WTC11 (cell line): ENCODE measurements at regions of chr6 and their contacts with region 1.

Region 1: DNA sequence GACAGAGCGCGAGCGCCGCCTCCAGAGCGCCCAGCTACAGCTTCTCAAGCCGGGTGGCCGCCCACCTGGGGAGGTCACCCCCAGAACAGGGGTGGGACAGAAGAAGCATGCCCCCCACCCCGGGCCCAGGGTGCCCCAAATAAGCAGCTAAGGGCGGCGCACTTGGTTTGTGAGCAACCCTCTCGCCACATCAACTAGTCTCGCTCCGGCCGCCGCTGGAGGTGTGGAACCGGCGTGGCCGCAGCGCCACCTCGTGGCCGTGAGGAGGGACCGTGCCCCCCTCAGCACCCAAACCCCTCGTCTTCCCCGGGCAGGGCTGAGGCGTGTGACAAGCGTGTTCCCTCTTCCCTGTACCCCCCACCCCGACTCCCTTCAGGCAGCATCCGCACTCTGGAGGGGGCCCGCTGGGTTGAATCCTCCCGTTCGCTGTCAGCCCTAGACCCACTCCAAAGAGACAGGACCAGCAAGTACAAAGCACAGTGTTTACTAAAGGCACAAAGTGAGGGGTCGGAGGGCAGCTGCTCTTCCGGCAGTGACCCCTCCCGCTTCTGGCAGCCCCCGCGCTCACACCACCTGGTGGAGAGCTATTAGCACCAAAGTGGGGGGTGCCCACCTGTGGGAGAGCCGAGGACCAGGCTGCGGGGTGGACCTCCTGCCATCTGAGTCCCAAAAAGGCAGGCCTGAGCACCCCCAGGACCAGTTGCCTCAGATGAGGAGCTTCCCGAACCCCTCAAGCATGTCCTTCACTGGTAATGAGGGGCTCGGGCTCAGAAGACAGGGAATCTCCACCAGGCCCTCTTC is 45.4 kb downstream of the MDFI start:
- DNase-seq: peak; percentile 82
- ATAC-seq: peak; percentile 50
- H3K4me3 Mint-ChIP-seq: peak overlapping the region; percentile 54
- H3K27ac Mint-ChIP-seq: no peak overlapping the region
- H3K4me1 Mint-ChIP-seq: peaks cover 47% of the 10 kb centered on the region
- H3K27me3 Mint-ChIP-seq: peaks cover 9% of the 10 kb centered on the region
- CTCF ChIP-seq: peak; percentile 86

Region 2: DNA sequence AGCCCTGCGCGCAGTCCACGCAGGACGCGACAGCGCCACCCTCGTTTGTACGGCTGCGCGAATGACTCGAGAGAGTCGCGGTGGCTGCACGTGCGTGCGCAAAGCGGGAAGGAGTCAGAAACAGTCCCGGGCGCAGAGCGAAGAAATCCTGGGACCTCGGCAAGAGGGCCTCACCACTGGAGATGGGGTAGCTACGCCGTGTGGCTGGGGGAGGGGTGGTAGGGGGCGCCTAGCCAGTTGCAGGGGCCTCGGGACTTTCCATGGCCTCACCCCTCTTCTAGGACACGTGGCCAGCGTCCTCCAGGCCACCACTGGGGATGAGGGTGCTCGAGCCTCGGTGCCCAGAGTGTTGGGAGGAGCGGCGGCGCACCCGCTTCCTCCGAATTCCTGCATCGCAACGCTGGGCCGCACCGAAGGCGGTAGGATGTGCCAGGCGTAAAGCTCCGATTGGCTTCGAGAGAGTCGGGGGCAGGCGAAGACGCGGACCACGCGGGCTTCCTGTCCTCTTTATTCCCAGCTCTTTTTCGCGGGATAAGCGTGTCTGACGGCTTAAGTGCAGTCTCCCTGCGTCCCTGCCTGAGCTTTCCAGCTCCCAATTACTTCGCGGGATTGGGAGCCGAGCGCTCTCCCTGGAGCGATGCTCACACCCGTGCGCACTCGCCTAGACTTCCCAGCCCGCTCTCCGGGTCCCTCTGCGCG is 309.6 kb before region 1 on chr6:
- CTCF ChIA-PET with region 1: interaction called, 152 read pairs
- POLR2A ChIA-PET with region 1: no interaction called
- DNase-seq: peak; percentile 72
- ATAC-seq: peak; percentile 29
- H3K4me3 Mint-ChIP-seq: peak overlapping the region; percentile 65
- H3K27ac Mint-ChIP-seq: no peak overlapping the region
- H3K4me1 Mint-ChIP-seq: peaks cover 50% of the 10 kb centered on the region
- H3K27me3 Mint-ChIP-seq: peaks cover 99% of the 10 kb centered on the region
- CTCF ChIP-seq: no peak

Region 3: GRCh38 chr6:41597246-41598000 is 86.3 kb before region 1 on chr6:
- CTCF ChIA-PET with region 1: interaction called, 144 read pairs
- POLR2A ChIA-PET with region 1: interaction called, 8 read pairs
- DNase-seq: no peak
- ATAC-seq: peak; percentile 15
- H3K4me3 Mint-ChIP-seq: no peak overlapping the region
- H3K27ac Mint-ChIP-seq: no peak overlapping the region
- H3K4me1 Mint-ChIP-seq: peaks cover 42% of the 10 kb centered on the region
- H3K27me3 Mint-ChIP-seq: peaks cover 3% of the 10 kb centered on the region; the same call in 1 of the 2 replicates
- CTCF ChIP-seq: no peak

Region 4: GRCh38 chr6:41644297-41644879 is 39.3 kb before region 1 on chr6:
- CTCF ChIA-PET with region 1: interaction called, 13 read pairs
- POLR2A ChIA-PET with region 1: no interaction called
- DNase-seq: no peak
- ATAC-seq: peak; percentile 17
- H3K4me3 Mint-ChIP-seq: peak overlapping the region; percentile 13
- H3K27ac Mint-ChIP-seq: no peak overlapping the region
- H3K4me1 Mint-ChIP-seq: peaks cover 67% of the 10 kb centered on the region
- H3K27me3 Mint-ChIP-seq: peaks cover 11% of the 10 kb centered on the region
- CTCF ChIP-seq: no peak

Region 5: DNA sequence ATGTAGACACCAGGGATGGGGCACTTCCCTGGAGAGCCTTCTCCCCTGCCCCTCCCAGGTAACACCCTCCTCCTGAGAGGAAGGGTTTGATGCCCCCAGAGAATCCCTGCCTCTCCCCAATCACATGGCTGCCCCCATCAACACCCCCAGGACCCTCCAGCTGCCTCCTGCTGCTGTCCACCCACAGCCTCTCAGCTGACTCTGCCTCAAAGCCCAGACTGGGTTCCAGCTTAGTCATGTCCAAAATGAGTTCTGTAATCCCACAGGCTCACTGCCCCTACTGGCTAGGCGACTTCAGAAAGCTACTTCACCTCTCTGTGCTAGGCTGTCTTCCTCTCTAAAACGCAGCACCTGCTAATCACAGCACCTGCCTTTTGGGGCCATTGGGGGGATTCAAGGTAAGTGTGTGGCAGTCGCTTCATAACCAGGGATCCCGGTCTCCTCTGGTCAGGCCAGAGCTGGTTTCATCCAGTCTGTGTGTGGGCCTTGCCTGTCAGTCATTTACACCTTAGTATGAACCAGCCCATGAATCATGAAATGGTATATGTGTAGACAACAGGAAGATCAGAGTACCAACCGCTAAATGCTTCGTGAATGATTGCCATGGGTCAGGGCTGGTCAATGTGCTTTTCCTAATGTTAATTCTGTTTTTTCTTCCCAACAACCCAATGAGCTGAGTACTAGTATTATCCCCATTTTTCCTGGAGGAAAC is 11.3 kb after region 1 on chr6:
- CTCF ChIA-PET with region 1: interaction called, 21 read pairs
- POLR2A ChIA-PET with region 1: no interaction called
- DNase-seq: no peak
- ATAC-seq: no peak; the same call in 1 of the 2 replicates
- H3K4me3 Mint-ChIP-seq: no peak overlapping the region
- H3K27ac Mint-ChIP-seq: no peak overlapping the region
- H3K4me1 Mint-ChIP-seq: peaks cover 2% of the 10 kb centered on the region; the same call in 1 of the 2 replicates
- H3K27me3 Mint-ChIP-seq: no peaks in the 10 kb centered on the region; the same call in 1 of the 2 replicates
- CTCF ChIP-seq: no peak

Region 6: DNA sequence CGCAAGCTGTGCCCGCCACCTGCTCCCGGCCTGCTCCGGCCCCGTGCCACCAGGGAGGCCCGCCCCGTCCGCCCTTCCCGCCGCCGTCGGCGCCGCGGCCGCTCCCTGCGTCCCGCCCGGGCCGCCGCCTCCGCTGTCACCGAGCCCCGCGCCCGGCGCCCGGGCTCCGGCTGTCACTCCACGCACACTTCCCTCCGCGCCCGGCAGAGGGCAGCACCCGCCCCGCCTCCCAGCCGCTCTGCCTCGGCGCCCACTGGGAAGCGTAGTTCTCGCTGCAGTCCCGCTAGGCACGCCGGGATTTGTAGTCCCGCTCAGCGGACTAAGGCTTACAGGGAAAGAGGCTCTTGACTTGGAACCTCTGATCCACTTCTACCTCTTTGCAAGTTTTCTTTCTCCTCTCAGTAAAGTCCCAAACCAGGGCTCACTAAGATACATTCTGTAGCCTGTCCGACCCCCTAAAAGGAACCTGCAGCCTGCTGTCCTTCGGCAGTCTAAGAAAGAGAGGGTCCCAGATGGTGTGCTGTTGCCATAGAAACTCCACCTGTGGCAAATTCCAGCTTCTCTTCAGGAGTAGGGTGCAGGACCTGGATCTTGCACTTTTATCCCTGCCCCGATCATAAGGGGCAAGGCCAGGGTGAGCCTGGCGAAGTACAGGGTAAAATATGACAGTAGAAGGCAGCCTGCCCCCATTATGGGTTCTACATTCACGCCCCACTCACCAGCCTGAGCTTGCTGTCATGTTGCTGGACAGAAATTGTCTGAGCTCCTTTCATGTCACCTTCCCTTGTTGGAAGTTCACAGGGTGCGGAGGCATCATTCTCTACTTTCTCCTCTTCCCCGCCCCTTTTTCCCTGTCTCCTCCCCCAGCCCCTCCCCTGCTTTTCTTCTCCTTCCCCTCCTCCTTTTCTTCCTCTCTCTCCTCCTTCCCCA is 52.0 kb after region 1 on chr6 and contains the start of gene TFEB:
- CTCF ChIA-PET with region 1: interaction called, 15 read pairs
- POLR2A ChIA-PET with region 1: no interaction called
- DNase-seq: peak; percentile 94
- ATAC-seq: peak; percentile 52
- H3K4me3 Mint-ChIP-seq: peak within 1 kb of the TSS; percentile 67
- H3K27ac Mint-ChIP-seq: 0 out of 2 replicates have a peak within 1 kb of the TSS, but pooled peaks have one; percentile 63
- H3K4me1 Mint-ChIP-seq: peaks cover 27% of the 10 kb centered on the region
- H3K27me3 Mint-ChIP-seq: peaks cover 18% of the 10 kb centered on the region
- CTCF ChIP-seq: peak; percentile 72
- total RNA-seq, gene TFEB: 3.1 to 3.9 TPM (median 3.3 TPM) in 3 replicates

Region 7: DNA sequence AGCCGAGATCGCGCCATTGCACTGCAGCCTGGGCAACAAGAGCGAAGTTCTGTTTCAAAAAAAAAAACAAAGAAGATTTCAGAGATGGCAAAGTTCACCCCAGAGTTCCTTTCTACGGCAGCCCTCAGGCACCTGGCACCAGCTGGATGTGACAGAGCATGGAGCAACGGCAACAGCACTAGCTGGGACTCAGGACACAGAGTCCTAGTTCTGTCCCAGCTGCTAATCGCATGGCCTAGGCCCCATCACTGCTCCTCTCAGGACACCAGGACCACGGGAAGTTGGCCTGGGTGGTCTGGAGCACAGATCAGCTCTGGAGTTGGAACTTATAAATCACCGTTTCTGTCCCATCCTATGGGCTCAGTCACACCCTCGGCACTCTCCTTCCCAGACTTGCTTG is 62.4 kb after region 1 on chr6:
- CTCF ChIA-PET with region 1: no interaction called
- POLR2A ChIA-PET with region 1: no interaction called
- DNase-seq: no peak
- ATAC-seq: no peak
- H3K4me3 Mint-ChIP-seq: no peak overlapping the region
- H3K27ac Mint-ChIP-seq: no peak overlapping the region
- H3K4me1 Mint-ChIP-seq: no peaks in the 10 kb centered on the region
- H3K27me3 Mint-ChIP-seq: no peaks in the 10 kb centered on the region; the same call in 1 of the 2 replicates
- CTCF ChIP-seq: no peak

Region 8: GRCh38 chr6:41756354-41756753 is 72.6 kb after region 1 on chr6:
- CTCF ChIA-PET with region 1: no interaction called
- POLR2A ChIA-PET with region 1: no interaction called
- DNase-seq: no peak
- ATAC-seq: no peak
- H3K4me3 Mint-ChIP-seq: no peak overlapping the region
- H3K27ac Mint-ChIP-seq: no peak overlapping the region
- H3K4me1 Mint-ChIP-seq: peaks cover 6% of the 10 kb centered on the region
- H3K27me3 Mint-ChIP-seq: peaks cover 3% of the 10 kb centered on the region; the same call in 1 of the 2 replicates
- CTCF ChIP-seq: no peak

Region 9: GRCh38 chr6:41818271-41819054 is 134.8 kb after region 1 on chr6:
- CTCF ChIA-PET with region 1: no interaction called
- POLR2A ChIA-PET with region 1: no interaction called
- DNase-seq: no peak
- ATAC-seq: no peak
- H3K4me3 Mint-ChIP-seq: no peak overlapping the region
- H3K27ac Mint-ChIP-seq: no peak overlapping the region
- H3K4me1 Mint-ChIP-seq: no peaks in the 10 kb centered on the region
- H3K27me3 Mint-ChIP-seq: no peaks in the 10 kb centered on the region
- CTCF ChIP-seq: no peak

Region 10: DNA sequence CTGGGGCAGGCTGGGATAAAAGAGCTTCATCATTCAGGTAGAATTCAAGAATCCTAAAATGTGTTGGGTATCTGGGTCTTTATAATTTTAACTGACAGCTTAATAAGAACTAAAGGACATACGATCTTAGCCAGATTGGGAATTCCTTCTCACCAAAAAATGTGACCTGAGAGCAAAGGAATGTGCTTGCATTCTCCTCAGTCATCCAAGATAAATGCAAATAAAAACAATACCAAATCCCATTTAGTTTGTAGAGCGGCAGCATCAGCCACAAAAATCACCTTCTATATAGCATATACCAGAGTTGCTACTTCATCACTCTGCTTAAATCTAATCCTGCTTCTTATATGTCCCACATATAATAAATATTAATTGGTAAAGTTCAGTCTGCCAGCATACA is 194.5 kb after region 1 on chr6:
- CTCF ChIA-PET with region 1: no interaction called
- POLR2A ChIA-PET with region 1: no interaction called
- DNase-seq: no peak
- ATAC-seq: no peak
- H3K4me3 Mint-ChIP-seq: no peak overlapping the region
- H3K27ac Mint-ChIP-seq: no peak overlapping the region
- H3K4me1 Mint-ChIP-seq: 0 out of 2 replicates have a peak, but pooled peaks cover 11% of the 10 kb centered on the region
- H3K27me3 Mint-ChIP-seq: no peaks in the 10 kb centered on the region
- CTCF ChIP-seq: no peak